GM10248 (cell line): ENCODE measurements at regions of chr1 and their contacts with region 1.

Region 1: GRCh38 chr1:201221201-201221846 is 30.7 kb downstream of the IGFN1 start:
- DNase-seq: no peak
- CTCF ChIP-seq: no peak

Region 2: GRCh38 chr1:201085916-201086735 is 135.2 kb before region 1 on chr1:
- CTCF ChIA-PET with region 1: interaction called, 12 read pairs
- POLR2A ChIA-PET with region 1: no interaction called
- DNase-seq: peak; percentile 73
- CTCF ChIP-seq: peak; percentile 67

Region 3: GRCh38 chr1:201206176-201206575 is 15.1 kb before region 1 on chr1:
- CTCF ChIA-PET with region 1: interaction called, 16 read pairs
- POLR2A ChIA-PET with region 1: no interaction called
- DNase-seq: no peak
- CTCF ChIP-seq: no peak

Region 4: GRCh38 chr1:201364511-201365105 is 143.3 kb after region 1 on chr1:
- CTCF ChIA-PET with region 1: no interaction called
- POLR2A ChIA-PET with region 1: no interaction called
- DNase-seq: no peak
- CTCF ChIP-seq: no peak